Natural killer cell (primary cell): ENCODE measurements at regions of chr10 and their contacts with region 1.

Region 1: GRCh38 chr10:88091490-88092105 is 228.2 kb downstream of the PTEN start:
- DNase-seq: peak; percentile 64 to 85
- ATAC-seq: peak; percentile 92 to 98 (median 97)
- H3K4me3 ChIP-seq: no peak overlapping the region
- H3K4me3 Mint-ChIP-seq: peak overlapping the region; percentile 36
- H3K27ac ChIP-seq: peak overlapping the region; percentile 64
- H3K27ac Mint-ChIP-seq: peak overlapping the region; percentile 89 to 90
- H3K4me1 ChIP-seq: peaks cover 42% of the 10 kb centered on the region
- H3K4me1 Mint-ChIP-seq: peaks cover 56 to 65% of the 10 kb centered on the region in 2 donors
- H3K27me3 ChIP-seq: no peaks in the 10 kb centered on the region
- H3K27me3 Mint-ChIP-seq: peaks cover 0 to 15% of the 10 kb centered on the region in 2 donors
- CTCF ChIP-seq: no peak

Region 2: DNA sequence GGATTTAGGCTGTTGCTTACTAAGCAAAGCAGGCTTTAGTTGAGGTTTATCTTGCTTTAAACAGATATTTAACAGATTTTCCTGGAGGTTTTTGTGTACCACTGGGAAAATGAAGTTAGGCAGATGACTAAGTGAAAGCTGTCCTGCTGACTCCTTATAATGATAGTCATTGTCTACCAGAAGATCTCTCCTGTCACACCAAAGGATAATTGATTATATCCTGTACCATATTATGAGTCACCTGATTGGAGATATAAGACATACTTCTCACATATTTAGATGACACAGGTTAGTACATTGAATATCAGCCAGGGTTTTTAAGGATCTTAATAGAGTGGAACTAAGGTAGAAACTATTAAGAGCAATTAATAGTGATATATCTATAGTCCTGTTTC is 159.8 kb before region 1 on chr10:
- intact Hi-C with region 1: loop called (anchors 5 kb)
- DNase-seq: no peak
- ATAC-seq: peak in 2 of 3 donors; percentile 19 to 30
- H3K4me3 ChIP-seq: no peak overlapping the region
- H3K4me3 Mint-ChIP-seq: peak overlapping the region; percentile 28
- H3K27ac ChIP-seq: no peak overlapping the region
- H3K27ac Mint-ChIP-seq: peak overlapping the region; percentile 15 to 27
- H3K4me1 ChIP-seq: no peaks in the 10 kb centered on the region
- H3K4me1 Mint-ChIP-seq: peaks cover 62 to 84% of the 10 kb centered on the region in 2 donors
- H3K27me3 ChIP-seq: no peaks in the 10 kb centered on the region
- H3K27me3 Mint-ChIP-seq: no peaks in the 10 kb centered on the region
- CTCF ChIP-seq: no peak

Region 3: GRCh38 chr10:88076027-88076880 is 15.3 kb before region 1 on chr10:
- intact Hi-C with region 1: loop called (anchors 2 kb)
- DNase-seq: peak in 1 of 2 donors; percentile 23
- ATAC-seq: peak; percentile 71 to 91 (median 84)
- H3K4me3 ChIP-seq: no peak overlapping the region
- H3K4me3 Mint-ChIP-seq: peak overlapping the region; percentile 69
- H3K27ac ChIP-seq: no peak overlapping the region
- H3K27ac Mint-ChIP-seq: peak overlapping the region in 1 of 2 donors; percentile 65
- H3K4me1 ChIP-seq: peaks cover 22% of the 10 kb centered on the region
- H3K4me1 Mint-ChIP-seq: peaks cover 44 to 57% of the 10 kb centered on the region in 2 donors
- H3K27me3 ChIP-seq: peaks cover 2% of the 10 kb centered on the region
- H3K27me3 Mint-ChIP-seq: peaks cover 35 to 91% of the 10 kb centered on the region in 2 donors
- CTCF ChIP-seq: no peak